GM18951 (cell line): ENCODE measurements at regions of chr13 and their contacts with region 1.

Region 1: DNA sequence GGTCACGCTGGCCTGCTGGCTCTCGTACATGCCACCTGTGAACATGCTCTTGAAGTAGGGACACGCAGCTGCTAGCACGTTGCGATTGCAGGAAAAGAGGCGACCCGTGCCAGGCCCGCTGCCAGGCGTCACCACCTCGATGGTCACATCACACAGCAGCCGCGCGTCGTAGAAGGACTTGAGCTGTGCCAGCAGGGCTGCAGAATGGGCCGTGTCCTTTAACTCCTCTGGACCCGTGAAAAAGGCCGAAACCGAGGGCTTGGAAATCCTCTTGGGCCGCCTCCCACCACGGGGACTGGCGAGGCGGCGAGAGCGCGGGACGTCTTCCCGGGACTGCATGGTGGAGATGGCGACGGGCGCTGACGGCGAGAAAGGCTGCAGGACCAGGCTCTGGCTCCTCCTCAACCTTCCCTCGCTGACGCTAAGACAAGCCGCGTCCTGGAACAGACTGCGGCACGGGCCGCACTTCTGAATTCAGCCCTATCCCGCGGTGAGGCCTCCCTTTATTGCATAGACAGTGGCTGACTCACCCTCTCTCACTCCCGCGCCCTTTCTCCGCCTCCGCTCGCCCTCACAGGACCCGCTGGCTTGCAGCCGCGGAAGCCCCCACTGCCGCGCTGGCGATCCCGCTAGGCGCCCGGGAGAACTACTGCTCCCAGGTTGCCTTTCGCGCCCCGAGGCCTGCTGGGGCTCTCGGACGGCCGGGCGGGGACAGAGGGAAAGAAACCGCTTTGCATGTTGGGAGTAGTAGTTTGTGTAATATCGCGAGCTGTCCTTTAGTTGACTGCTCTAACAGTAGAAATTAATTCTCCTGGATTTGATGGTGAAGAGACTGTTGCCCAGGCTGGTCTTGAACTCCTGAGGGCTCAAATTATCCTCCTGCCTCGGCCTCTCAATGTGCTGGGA is at the start of gene KBTBD7:
- POLR2A ChIP-seq: peak; percentile 76

Region 2: DNA sequence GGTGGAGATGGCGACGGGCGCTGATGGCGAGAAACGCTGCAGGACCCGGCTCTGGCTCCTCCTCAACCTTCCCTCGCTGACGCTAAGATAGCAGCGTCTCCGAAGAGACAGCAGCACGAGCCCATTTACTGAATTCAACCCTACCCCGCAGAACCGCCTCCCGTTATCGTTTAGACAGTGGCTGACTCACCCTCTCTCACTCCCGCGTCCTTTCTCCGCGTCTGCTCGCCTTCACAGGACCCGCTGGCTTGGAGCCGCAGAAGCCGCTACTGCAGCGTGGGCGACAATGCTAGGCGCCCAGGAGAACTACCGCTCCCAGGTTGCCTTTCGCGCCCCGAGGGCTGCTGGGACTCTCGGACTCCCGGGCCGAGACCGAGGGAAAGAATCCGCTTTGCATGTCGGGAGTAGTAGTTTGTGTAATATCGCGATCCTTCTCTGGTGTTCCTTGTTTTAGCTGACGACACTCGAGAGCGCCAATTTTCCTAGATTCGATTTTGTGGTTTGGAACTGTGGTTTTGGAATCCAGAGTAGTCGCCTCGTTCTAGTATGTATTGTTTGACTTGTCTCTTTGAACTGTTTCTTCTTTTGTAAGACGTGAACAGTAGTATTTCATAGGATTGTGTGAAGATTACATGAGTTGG is 61.5 kb before region 1 on chr13 and contains the start of gene KBTBD6:
- in situ Hi-C with region 1: loop called (anchors 10 kb)
- POLR2A ChIP-seq: peak; percentile 75